ENCODE measurements at regions of chr16 and their contacts with region 1.

Region 1: DNA sequence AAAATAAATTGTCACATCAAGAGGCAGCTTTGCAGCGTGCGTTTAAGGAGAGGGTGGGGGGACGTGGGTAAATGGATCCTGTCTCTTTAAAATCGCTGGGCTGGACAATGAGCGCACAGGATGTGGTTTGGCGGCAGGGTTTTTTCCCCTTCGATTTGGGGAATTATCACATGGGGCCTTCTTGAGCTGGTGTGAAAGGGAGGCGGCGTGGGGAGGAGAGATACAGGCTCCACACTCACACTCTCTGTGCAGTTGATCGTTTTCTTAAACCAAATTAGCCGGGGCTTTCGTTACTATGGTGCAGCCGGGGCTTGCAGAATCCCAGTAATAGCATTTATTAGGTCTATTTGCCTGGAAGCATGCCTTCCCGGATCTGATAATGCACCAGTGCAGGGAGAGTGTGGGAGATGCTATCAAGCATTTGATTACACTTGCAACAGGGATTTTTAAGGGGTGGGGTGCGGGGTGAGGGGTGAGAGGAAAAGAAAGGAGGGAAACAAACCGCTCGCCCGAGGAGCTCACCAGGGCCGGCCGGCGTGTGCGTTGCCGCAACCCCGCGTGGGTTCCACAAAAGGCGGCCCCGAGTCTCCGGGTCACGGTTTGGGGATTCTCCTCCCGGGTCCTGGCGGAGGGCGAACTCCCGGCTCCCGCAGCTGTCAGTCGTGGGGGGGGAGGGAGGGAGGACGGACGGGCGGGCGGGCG is 58.9 kb upstream of the GSE1 start:
- DNase-seq: peak; percentile 61 to 63
- H3K4me3 ChIP-seq: peak overlapping the region in 2 of 3 donors; percentile 70 to 85
- H3K27ac ChIP-seq: peak overlapping the region; percentile 84 to 96 (median 96)
- H3K4me1 ChIP-seq: peaks cover 24 to 29% of the 10 kb centered on the region in 2 donors
- H3K27me3 ChIP-seq: no peaks in the 10 kb centered on the region
- CTCF ChIP-seq: no peak
- POLR2A ChIP-seq: peak in 1 of 2 donors; percentile 43

Region 2: GRCh38 chr16:85461814-85462713 is 92.2 kb before region 1 on chr16:
- intact Hi-C with region 1: loop called (anchors 5 kb)
- DNase-seq: peak; percentile 90 to 94
- H3K4me3 ChIP-seq: peak overlapping the region in 1 of 3 donors; percentile 24
- H3K27ac ChIP-seq: peak overlapping the region; percentile 89 to 95 (median 92)
- H3K4me1 ChIP-seq: peaks cover 82 to 95% of the 10 kb centered on the region in 2 donors
- H3K27me3 ChIP-seq: no peaks in the 10 kb centered on the region
- CTCF ChIP-seq: no peak
- POLR2A ChIP-seq: peak in 1 of 2 donors; percentile 72

Region 3: DNA sequence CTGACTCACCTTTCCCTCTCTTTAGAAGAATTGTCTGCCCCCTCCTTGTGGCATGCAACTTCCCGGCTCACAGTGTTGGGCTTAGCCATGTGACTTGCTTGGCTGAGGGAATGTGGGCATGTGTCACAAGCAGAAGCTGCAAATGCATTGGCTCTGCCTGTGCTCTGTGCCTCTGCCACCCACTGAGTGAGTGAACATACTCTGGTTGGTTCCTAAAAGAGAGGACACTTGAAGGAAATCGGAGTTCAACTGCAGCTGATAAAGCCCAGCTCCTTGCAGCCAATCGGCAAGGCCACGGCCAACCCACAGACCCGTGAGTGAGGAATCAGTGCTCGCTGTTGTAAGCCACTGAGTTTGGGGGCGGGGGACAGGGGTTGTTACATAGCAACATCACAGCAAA is 145.4 kb after region 1 on chr16:
- intact Hi-C with region 1: no loop called
- DNase-seq: no peak
- H3K4me3 ChIP-seq: no peak overlapping the region
- H3K27ac ChIP-seq: no peak overlapping the region
- H3K4me1 ChIP-seq: no peaks in the 10 kb centered on the region
- H3K27me3 ChIP-seq: no peaks in the 10 kb centered on the region
- CTCF ChIP-seq: no peak
- POLR2A ChIP-seq: no peak

Region 4: DNA sequence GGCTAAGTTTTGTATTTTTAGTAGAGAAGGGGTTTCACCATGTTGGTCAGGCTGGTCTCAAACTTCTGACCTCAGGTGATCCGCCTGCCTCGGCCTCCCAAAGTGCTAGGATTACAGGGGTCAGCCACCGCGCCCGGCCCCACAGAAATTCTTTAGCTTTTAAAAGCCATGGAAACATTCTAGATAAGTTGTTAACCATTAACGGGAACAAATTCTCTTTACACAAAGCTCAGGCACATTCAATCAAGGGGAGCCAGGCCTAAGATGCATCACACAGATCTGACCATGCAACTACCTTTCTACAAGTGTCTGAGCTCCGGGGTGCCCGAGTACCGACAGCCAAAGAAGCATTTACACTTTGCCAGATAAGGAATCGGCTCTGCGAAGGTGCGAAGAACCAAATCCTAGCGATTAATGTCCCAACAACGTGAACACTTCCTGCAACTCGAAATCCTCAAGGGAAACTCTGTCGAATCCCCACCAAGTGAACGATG is 244.1 kb after region 1 on chr16:
- intact Hi-C with region 1: no loop called
- DNase-seq: no peak
- H3K4me3 ChIP-seq: peak overlapping the region in 2 of 3 donors; percentile 82 to 99
- H3K27ac ChIP-seq: peak overlapping the region in 1 of 3 donors; percentile 85
- H3K4me1 ChIP-seq: peaks cover 20 to 24% of the 10 kb centered on the region in 2 donors
- H3K27me3 ChIP-seq: no peaks in the 10 kb centered on the region
- CTCF ChIP-seq: no peak
- POLR2A ChIP-seq: no peak